ENCODE measurements at regions of chr7 and their contacts with region 1.

Region 1: DNA sequence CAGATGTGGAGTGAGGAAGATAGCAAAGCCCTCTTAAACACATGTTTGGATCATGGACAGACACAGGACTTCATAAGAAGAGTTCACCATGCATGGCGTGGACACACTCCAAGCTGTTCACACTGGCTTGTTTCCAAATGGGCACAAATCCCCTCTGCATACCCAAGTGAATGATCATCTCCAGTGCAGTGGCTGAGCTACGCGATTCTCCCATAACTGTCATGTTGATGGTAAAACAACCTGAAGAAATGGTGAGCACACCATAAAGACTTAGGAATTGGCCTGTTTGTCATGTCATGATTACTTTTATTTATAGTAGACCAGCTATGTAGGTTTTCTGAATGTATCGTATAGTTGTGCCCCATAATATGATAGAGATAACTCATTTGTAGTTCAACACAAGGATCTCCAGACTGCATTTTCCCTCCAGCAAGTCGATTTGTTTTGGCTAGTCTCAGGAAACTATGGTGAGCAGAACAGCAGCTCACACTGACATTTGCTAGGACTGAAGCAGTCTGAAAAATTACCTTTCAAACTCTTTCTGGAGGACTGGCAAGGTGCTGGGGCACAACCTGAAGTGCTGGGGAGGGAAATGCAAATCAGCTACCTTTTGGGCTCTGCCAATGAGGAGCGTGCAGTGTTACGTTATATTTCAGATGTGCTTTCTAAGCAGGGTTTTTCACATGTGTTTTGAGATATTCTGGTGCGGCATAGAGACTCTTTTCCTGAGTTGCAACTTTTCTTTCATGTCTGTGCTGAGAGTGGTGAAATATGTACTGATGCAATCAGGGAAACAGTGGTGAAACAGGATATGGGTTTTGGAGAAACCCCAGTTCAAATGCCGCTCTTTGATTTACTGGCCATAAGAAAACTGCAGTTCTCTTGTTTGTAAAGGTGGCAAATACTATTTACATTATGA is 629.6 kb upstream of the DPP6 start:
- DNase-seq: no peak
- H3K4me3 ChIP-seq: no peak overlapping the region
- H3K27ac ChIP-seq: no peak overlapping the region
- H3K4me1 ChIP-seq: no peaks in the 10 kb centered on the region
- H3K27me3 ChIP-seq: no peaks in the 10 kb centered on the region
- CTCF ChIP-seq: no peak
- POLR2A ChIP-seq: no peak

Region 2: GRCh38 chr7:153443032-153443701 is 20.6 kb after region 1 on chr7:
- intact Hi-C with region 1: loop called (anchors 1 kb)
- DNase-seq: no peak
- H3K4me3 ChIP-seq: no peak overlapping the region
- H3K27ac ChIP-seq: no peak overlapping the region
- H3K4me1 ChIP-seq: no peaks in the 10 kb centered on the region
- H3K27me3 ChIP-seq: no peaks in the 10 kb centered on the region
- CTCF ChIP-seq: no peak
- POLR2A ChIP-seq: no peak